Activated CD4-positive, alpha-beta memory T cell treated with anti-CD3 and anti-CD28 coated beads for 36 hours (primary cell): ENCODE measurements at regions of chr2 and their contacts with region 1.

Region 1: GRCh38 chr2:178208817-178209216 is 14.5 kb downstream of the OSBPL6 start:
- DNase-seq: no peak
- H3K4me3 Mint-ChIP-seq: no peak overlapping the region
- H3K27ac Mint-ChIP-seq: no peak overlapping the region
- H3K4me1 Mint-ChIP-seq: no peaks in the 10 kb centered on the region
- H3K27me3 Mint-ChIP-seq: peaks cover 33% of the 10 kb centered on the region

Region 2: GRCh38 chr2:179454443-179455171 is 1245.8 kb after region 1 on chr2:
- CTCF ChIA-PET with region 1: no interaction called
- POLR2A ChIA-PET with region 1: no interaction called
- intact Hi-C with region 1: loop called (anchors 10 kb)
- DNase-seq: no peak
- H3K4me3 Mint-ChIP-seq: no peak overlapping the region
- H3K27ac Mint-ChIP-seq: no peak overlapping the region
- H3K4me1 Mint-ChIP-seq: no peaks in the 10 kb centered on the region
- H3K27me3 Mint-ChIP-seq: no peaks in the 10 kb centered on the region